Left cardiac atrium (tissue), 4 donors: ENCODE measurements at regions of chr15 and their contacts with region 1.

Region 1: GRCh38 chr15:52735231-52736089 is 54.7 kb downstream of the ONECUT1 start:
- DNase-seq: no peak
- ATAC-seq: peak; percentile 78 to 87

Region 2: GRCh38 chr15:52256366-52256765 is 479.1 kb before region 1 on chr15:
- intact Hi-C with region 1: loop called (anchors 2 to 5 kb)
- DNase-seq: peak; percentile 68
- ATAC-seq: peak; percentile 46 to 47

Region 3: GRCh38 chr15:52626671-52627369 is 108.6 kb before region 1 on chr15:
- intact Hi-C with region 1: loop called in 1 of 2 experiments (anchors 10 kb)
- DNase-seq: no peak
- ATAC-seq: no peak

Region 4: DNA sequence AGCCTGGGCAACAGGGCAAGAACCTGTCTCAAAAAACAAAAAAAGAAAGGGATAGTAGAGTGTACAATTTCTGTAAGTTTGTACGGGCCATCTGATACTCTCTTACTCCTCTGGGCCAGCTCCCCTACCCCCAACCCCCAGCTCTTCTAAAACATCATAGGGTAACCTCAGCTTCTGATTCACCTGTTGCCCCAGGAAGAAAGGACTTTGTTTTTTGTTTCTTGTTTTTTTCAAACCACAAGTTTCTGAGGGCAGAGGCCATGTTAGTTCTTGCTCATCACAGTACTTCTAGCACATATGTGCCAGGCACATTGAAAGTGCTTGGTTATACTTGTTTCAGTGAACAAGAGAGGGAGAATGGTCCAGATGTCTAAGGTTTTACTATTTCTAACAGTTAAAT is 76.5 kb before region 1 on chr15:
- intact Hi-C with region 1: no loop called
- DNase-seq: no peak
- ATAC-seq: no peak